ENCODE measurements at regions of chr9 and their contacts with region 1.

Region 1: GRCh38 chr9:78035383-78035993 is 3.9 kb upstream of the GNAQ start:
- DNase-seq: peak; percentile 69
- H3K4me3 Mint-ChIP-seq: peak overlapping the region; percentile 34
- H3K27ac Mint-ChIP-seq: no peak overlapping the region
- H3K4me1 Mint-ChIP-seq: peaks cover 28% of the 10 kb centered on the region
- H3K27me3 Mint-ChIP-seq: no peaks in the 10 kb centered on the region

Region 2: DNA sequence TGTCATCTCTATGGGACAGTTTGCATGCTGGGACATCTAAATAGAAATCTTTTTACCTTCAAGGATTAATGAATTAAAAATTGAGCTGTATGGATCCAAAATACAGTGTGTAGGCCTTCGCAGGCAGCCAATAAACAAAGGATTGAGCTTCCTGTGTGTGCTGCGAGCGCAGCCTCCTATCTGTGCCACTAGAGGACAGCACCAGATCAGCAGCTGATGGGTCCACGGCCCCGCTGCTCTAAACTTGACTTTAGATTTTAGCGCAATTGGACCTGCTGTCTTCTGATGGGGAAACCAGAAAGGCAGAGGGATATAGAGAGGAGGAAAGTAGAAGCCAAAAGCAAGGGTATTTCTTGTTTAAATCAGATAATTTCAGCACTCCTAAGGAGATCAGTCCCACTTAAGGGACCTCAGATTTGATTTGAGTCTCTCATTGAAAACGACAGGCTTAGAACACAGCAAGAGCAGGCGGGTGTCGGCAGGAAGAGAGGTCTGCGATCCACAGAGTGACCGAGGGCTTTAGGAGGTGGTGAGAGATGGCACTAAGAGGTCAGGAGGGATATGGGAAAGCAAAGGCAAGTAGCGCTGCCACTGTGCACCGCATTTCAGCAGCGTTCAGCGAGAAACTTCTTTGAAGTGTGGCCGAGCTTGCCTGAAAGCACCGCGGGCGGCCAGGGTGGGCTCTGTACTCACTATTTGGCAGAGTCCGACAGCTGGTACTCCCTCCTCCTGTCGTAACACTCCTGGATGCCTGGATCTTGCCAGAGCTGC is 601.6 kb before region 1 on chr9:
- CTCF ChIA-PET with region 1: interaction called, 5 read pairs
- intact Hi-C with region 1: loop called (anchors 1 kb)
- DNase-seq: peak; percentile 70
- H3K4me3 Mint-ChIP-seq: no peak overlapping the region
- H3K27ac Mint-ChIP-seq: no peak overlapping the region
- H3K4me1 Mint-ChIP-seq: peaks cover 3% of the 10 kb centered on the region
- H3K27me3 Mint-ChIP-seq: no peaks in the 10 kb centered on the region

Region 3: GRCh38 chr9:77663754-77664153 is 371.7 kb before region 1 on chr9:
- CTCF ChIA-PET with region 1: no interaction called
- intact Hi-C with region 1: loop called (anchors 5 kb)
- DNase-seq: no peak
- H3K4me3 Mint-ChIP-seq: no peak overlapping the region
- H3K27ac Mint-ChIP-seq: no peak overlapping the region
- H3K4me1 Mint-ChIP-seq: no peaks in the 10 kb centered on the region
- H3K27me3 Mint-ChIP-seq: peaks cover 6% of the 10 kb centered on the region

Region 4: DNA sequence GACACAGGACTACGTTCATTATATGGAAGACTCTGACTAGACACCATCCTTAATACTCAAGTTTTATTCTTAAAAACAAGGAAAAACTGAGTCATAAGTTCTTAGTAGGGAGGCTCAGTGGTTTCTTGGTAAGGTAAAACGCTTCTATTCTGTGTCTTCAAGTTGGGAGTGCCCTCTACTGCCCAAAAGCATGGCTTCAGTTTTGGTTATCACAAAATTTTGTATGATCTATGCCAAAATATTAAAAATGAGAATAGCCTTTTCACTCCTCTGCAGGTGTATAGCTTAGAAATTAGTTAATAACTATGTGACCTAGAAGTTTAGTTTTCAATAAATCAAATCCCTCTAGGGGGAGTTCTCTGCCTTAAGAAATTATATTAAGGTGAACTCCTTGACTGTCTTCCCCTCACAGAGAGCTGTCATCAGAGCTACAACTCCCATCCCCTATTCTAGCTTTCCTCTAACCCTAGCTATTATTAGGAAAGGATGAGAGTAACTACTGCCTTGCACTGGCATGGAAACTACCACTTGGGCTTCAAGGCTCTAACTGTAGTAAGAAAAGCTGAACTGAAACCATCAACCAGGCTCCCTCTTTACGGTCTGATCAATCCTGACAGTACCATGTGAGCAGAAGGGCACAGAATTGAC is 193.6 kb before region 1 on chr9:
- CTCF ChIA-PET with region 1: interaction called, 24 read pairs
- intact Hi-C with region 1: loop called (anchors 1 kb)
- DNase-seq: no peak
- H3K4me3 Mint-ChIP-seq: no peak overlapping the region
- H3K27ac Mint-ChIP-seq: no peak overlapping the region
- H3K4me1 Mint-ChIP-seq: peaks cover 7% of the 10 kb centered on the region
- H3K27me3 Mint-ChIP-seq: no peaks in the 10 kb centered on the region

Region 5: GRCh38 chr9:77997611-77998284 is 37.7 kb before region 1 on chr9:
- CTCF ChIA-PET with region 1: interaction called, 3 read pairs
- intact Hi-C with region 1: loop called (anchors 1 kb)
- DNase-seq: no peak
- H3K4me3 Mint-ChIP-seq: no peak overlapping the region
- H3K27ac Mint-ChIP-seq: no peak overlapping the region
- H3K4me1 Mint-ChIP-seq: peaks cover 44% of the 10 kb centered on the region
- H3K27me3 Mint-ChIP-seq: no peaks in the 10 kb centered on the region

Region 6: GRCh38 chr9:78121488-78121887 is 86.0 kb after region 1 on chr9:
- CTCF ChIA-PET with region 1: interaction called, 19 read pairs
- intact Hi-C with region 1: loop called (anchors 1 kb)
- DNase-seq: peak; percentile 79
- H3K4me3 Mint-ChIP-seq: no peak overlapping the region
- H3K27ac Mint-ChIP-seq: no peak overlapping the region
- H3K4me1 Mint-ChIP-seq: peaks cover 33% of the 10 kb centered on the region
- H3K27me3 Mint-ChIP-seq: no peaks in the 10 kb centered on the region

Region 7: GRCh38 chr9:78158286-78158685 is 122.8 kb after region 1 on chr9:
- CTCF ChIA-PET with region 1: no interaction called
- intact Hi-C with region 1: no loop called
- DNase-seq: no peak
- H3K4me3 Mint-ChIP-seq: no peak overlapping the region
- H3K27ac Mint-ChIP-seq: no peak overlapping the region
- H3K4me1 Mint-ChIP-seq: no peaks in the 10 kb centered on the region
- H3K27me3 Mint-ChIP-seq: no peaks in the 10 kb centered on the region

Region 8: DNA sequence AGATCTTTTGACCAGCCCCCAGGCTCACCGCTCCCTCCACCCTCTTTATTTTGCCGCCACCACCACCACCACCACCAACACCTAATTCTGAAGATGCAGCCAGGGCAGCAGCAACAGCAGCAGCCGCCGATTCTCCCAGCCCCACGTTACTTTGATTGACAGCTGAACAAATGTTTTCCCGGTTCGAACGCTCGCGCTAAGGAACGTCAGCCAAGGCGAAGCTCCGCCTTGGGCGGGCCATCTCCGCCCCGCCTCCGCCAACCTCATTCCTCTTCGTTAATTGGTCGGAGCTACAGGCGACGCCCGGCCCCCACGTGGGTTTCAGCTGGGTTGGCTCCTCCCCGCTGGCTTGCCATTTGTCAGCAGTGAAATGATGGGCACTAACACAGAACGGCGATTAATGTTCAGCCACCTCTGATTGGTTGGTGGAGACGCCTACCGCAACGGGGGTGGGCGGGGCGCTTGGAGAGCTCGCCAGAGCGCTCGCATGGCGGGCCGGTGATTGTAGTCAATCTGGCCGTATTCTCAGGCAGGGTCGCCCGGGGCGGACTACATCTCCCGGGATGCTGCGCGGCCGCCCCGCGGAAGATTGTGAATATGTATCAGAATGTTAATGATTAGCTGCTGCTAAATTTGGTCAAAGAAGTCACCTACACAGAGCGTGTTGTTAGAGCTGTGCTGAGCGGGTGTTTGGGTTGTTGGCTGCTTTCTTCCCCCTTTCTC is 1536.0 kb after region 1 on chr9 and contains the start of gene TLE4:
- CTCF ChIA-PET with region 1: no interaction called
- intact Hi-C with region 1: loop called (anchors 5 kb)
- DNase-seq: peak; percentile 99
- H3K4me3 Mint-ChIP-seq: peak within 1 kb of the TSS; percentile 80
- H3K27ac Mint-ChIP-seq: peak within 1 kb of the TSS; percentile 46
- H3K4me1 Mint-ChIP-seq: peaks cover 26% of the 10 kb centered on the region
- H3K27me3 Mint-ChIP-seq: peaks cover 6% of the 10 kb centered on the region
- total RNA-seq, gene TLE4: 11.2 to 13.1 TPM